A673 (cell line): ENCODE measurements at regions of chr9 and their contacts with region 1.

Region 1: GRCh38 chr9:72794947-72795346 is 157.9 kb downstream of the ALDH1A1 start:
- DNase-seq: no peak
- H3K4me3 ChIP-seq: no peak overlapping the region
- H3K27ac ChIP-seq: no peak overlapping the region
- H3K4me1 ChIP-seq: no peaks in the 10 kb centered on the region
- H3K27me3 ChIP-seq: no peaks in the 10 kb centered on the region
- CTCF ChIP-seq: no peak

Region 2: DNA sequence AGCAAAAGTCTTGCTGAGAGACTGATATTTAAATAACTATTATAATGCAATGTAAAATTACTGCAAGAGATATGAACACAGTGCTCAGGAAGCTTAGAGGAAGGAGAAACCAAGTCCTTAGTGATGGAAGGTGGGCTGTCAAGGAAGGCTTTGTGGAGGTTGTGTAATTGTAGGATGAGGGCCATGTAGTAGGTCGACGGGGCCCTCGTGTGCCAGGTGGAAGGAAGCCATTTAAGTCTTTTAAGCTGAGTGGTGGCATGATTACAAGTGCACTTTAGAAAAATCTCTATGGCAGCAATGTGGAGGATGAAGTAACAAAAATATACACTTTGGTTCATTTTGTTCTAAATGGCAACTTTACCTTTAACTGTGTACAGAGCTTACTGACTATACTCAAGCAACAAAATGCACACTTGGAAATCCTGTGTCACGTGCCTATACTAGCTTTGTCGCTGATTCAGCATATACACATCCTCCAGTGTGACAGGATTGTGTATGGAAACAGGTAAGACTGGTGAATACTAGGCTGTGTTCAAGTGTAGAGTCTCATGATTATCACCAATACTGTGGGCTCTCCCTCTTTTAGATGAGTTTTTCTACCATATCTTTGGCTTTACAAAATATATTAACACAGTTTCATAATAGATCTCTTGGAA is 194.9 kb before region 1 on chr9:
- CTCF ChIA-PET with region 1: no interaction called
- POLR2A ChIA-PET with region 1: no interaction called
- intact Hi-C with region 1: no loop called
- DNase-seq: no peak
- H3K4me3 ChIP-seq: no peak overlapping the region
- H3K27ac ChIP-seq: no peak overlapping the region
- H3K4me1 ChIP-seq: no peaks in the 10 kb centered on the region
- H3K27me3 ChIP-seq: no peaks in the 10 kb centered on the region
- CTCF ChIP-seq: no peak

Region 3: DNA sequence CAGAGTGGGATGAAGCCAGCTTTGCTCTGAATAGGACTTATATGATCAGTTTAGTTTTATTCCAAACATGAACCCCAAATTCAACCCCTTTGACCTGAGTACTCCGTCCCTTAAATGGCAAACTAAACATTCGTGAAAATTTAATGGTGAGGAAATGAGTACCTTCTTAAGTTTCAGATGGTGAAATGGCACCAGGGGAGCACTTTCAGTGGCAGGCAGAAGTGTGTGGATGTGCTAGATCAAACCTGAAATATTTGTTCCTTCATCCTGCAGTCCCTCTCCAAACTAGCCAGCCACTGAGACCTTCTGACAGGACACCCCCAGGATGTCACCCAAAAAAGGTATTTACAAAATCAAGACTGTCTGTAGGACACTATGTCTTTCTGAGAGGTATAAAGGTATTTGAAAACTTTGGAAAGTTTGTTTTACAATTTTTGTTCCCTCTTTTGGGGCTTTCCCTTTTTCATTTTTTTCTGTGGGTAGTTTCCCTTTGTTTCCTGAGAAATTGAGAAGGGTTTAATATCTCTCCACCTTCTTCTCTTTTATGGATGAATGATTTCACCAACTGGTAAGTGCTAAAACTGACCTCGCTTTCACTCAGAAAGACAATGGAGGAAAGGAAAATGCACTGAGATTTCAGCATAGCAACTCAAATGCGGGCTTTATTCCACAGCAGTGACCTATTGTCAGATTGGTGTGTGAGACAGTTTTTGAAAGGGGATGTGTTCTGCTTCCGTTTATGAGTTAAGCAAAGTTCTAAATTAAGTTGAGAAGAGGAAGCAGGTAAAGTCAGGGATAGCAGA is 146.4 kb before region 1 on chr9:
- CTCF ChIA-PET with region 1: no interaction called
- POLR2A ChIA-PET with region 1: no interaction called
- intact Hi-C with region 1: no loop called
- DNase-seq: no peak
- H3K4me3 ChIP-seq: no peak overlapping the region
- H3K27ac ChIP-seq: no peak overlapping the region
- H3K4me1 ChIP-seq: no peaks in the 10 kb centered on the region
- H3K27me3 ChIP-seq: no peaks in the 10 kb centered on the region
- CTCF ChIP-seq: no peak

Region 4: DNA sequence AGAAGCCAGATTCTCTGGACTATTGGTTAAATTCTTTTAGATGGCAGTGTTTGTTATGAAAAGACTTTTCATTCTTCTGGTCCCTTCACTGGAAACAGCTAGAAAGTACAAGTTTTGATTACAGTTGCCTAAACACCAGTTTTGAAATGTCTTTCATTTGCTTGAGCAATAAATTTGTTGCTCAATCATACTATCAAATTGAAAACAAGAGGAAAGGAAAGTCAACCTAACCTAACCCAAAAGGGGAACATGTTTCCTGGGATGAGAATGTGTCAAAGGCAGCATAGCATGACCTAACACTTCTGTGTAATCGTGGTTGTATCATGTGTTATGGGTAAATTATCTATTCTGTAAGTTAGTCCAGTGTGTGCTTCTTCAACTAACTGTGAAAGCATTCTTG is 60.3 kb before region 1 on chr9:
- CTCF ChIA-PET with region 1: no interaction called
- POLR2A ChIA-PET with region 1: no interaction called
- intact Hi-C with region 1: loop called (anchors 10 kb)
- DNase-seq: no peak
- H3K4me3 ChIP-seq: no peak overlapping the region
- H3K27ac ChIP-seq: no peak overlapping the region
- H3K4me1 ChIP-seq: no peaks in the 10 kb centered on the region
- H3K27me3 ChIP-seq: no peaks in the 10 kb centered on the region
- CTCF ChIP-seq: no peak

Region 5: DNA sequence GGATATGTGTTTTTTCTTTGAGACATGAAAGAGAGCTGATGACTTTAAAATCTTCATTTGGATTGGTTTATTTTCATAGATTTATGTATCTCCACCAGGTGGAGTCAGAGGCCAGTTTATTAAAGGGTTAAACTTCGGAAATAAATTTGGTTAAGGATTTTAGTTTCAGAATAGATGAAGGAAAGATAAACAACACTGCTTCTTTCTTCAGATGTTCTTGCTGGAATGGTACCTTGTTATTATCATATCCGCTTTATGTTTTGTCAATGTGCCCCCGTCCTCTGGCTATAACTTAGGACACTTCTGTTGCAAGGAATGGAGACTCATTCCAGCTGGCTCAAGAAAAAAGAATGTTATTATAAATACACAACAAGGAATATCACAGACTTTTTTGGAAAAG is 76.7 kb after region 1 on chr9:
- CTCF ChIA-PET with region 1: no interaction called
- POLR2A ChIA-PET with region 1: no interaction called
- intact Hi-C with region 1: no loop called
- DNase-seq: peak; percentile 56
- H3K4me3 ChIP-seq: no peak overlapping the region
- H3K27ac ChIP-seq: no peak overlapping the region
- H3K4me1 ChIP-seq: peaks cover 6% of the 10 kb centered on the region
- H3K27me3 ChIP-seq: no peaks in the 10 kb centered on the region
- CTCF ChIP-seq: peak; percentile 67

Region 6: GRCh38 chr9:73459817-73460216 is 664.9 kb after region 1 on chr9:
- CTCF ChIA-PET with region 1: no interaction called
- POLR2A ChIA-PET with region 1: no interaction called
- intact Hi-C with region 1: no loop called
- DNase-seq: no peak
- H3K4me3 ChIP-seq: no peak overlapping the region
- H3K27ac ChIP-seq: no peak overlapping the region
- H3K4me1 ChIP-seq: no peaks in the 10 kb centered on the region
- H3K27me3 ChIP-seq: peaks cover 11% of the 10 kb centered on the region
- CTCF ChIP-seq: no peak